ENCODE measurements at regions of chr19 and their contacts with region 1.

Region 1: GRCh38 chr19:53467485-53468262 is at the start of gene ZNF813:
- DNase-seq: peak; percentile 99
- H3K4me3 ChIP-seq: peak within 1 kb of the TSS; percentile 68 to 82 (median 72)
- H3K27ac ChIP-seq: peak within 1 kb of the TSS; percentile 70 to 84 (median 78)
- H3K4me1 ChIP-seq: peaks cover 11 to 29% (median 24%) of the 10 kb centered on the region in 4 donors
- H3K27me3 ChIP-seq: peaks cover 0 to 29% (median 0%) of the 10 kb centered on the region in 4 donors
- CTCF ChIP-seq: no peak
- EP300 ChIP-seq: no peak
- POLR2A ChIP-seq: peak; percentile 37
- total RNA-seq, gene ZNF813: 1.7 to 3.5 (median 3.2) TPM

Region 2: DNA sequence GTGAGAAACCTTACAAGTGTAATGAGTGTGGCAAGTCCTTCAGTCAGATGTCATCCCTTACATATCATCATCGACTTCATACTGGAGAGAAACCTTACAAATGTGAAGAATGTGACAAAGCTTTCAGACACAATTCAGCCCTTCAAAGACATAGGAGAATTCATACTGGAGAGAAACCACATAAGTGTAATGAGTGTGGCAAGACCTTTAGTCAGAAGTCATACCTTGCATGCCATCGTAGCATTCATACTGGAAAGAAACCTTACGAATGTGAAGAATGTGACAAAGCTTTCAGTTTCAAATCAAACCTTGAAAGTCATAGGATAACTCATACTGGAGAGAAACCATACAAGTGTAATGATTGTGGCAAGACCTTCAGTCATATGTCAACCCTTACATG is 86.3 kb before region 1 on chr19:
- intact Hi-C with region 1: no loop called
- DNase-seq: no peak
- H3K4me3 ChIP-seq: no peak overlapping the region
- H3K27ac ChIP-seq: no peak overlapping the region
- H3K4me1 ChIP-seq: no peaks in the 10 kb centered on the region
- H3K27me3 ChIP-seq: no peaks in the 10 kb centered on the region
- CTCF ChIP-seq: no peak
- EP300 ChIP-seq: no peak
- POLR2A ChIP-seq: no peak

Region 3: DNA sequence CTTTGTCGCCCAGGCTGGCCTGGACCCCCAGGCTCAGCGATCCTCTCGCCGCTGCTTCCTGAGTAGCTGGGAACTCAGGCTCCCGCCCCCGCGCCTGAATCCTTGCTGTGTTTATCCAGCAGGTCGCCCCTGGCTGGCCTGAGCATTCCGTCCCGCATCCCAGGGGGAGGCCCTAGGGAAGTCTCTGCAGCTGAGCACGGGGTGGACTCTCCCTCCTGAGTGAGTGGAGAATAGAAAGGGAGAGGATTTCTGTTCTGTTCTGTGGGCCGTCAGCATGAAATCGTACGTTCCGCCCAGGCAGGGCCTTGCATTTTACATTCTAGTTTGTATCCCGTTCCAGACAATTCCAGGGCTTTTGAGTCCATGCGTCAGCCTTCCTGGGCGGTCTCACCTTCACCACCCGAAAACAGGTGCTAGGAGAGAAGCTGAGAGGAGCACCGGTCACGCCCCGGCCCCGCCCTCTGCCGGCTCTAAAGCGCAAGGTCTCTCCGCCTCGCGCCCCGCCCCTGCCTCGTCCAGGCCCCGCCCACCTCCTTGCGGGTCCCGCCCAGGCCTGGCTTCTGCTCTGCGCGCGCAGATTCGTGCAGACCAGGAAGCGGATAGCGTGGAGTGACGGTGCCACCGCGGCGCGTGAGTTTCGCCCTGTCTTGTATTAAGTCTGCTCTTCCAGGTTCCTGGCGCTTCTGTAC is 36.1 kb before region 1 on chr19 and contains the start of gene ZNF761:
- intact Hi-C with region 1: loop called (anchors 5 kb)
- DNase-seq: peak; percentile 99
- H3K4me3 ChIP-seq: peak within 1 kb of the TSS; percentile 66 to 78 (median 74)
- H3K27ac ChIP-seq: peak within 1 kb of the TSS; percentile 72 to 80 (median 74)
- H3K4me1 ChIP-seq: peaks cover 8 to 15% (median 14%) of the 10 kb centered on the region in 4 donors
- H3K27me3 ChIP-seq: no peaks in the 10 kb centered on the region
- CTCF ChIP-seq: peak in 2 of 3 experiments; percentile 45 to 49
- EP300 ChIP-seq: no peak
- POLR2A ChIP-seq: peak; percentile 27
- total RNA-seq, gene ZNF761: 6.7 to 8.4 (median 7.4) TPM

Measured in esophagus muscularis mucosa (tissue), 4 donors.